ENCODE measurements at regions of chr9 and their contacts with region 1.

Region 1: GRCh38 chr9:77892171-77892570 is 139.4 kb downstream of the GNAQ start:
- DNase-seq: no peak
- ATAC-seq: no peak
- H3K4me3 ChIP-seq: no peak overlapping the region
- H3K27ac ChIP-seq: no peak overlapping the region
- H3K4me1 ChIP-seq: no peaks in the 10 kb centered on the region
- H3K27me3 ChIP-seq: no peaks in the 10 kb centered on the region
- CTCF ChIP-seq: no peak

Region 2: DNA sequence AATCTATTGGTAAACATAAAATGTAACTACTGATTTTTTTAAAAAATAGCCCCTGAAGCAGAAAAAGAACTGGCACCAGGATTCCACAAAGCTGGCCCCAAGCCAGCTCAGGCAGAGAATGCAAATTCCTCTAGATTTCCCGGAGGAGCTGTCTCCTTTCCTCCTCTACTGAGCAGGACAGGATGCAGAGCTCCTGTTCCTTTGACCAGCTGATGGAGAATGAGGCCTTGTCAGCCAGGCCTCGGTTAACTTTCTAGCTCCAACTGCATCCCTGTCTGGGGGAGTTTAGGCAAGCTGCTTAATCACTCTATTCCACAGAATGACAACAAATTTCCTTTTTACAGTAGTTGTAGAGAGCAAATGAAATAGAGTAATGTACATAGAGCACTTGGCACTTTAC is 16.1 kb before region 1 on chr9:
- CTCF ChIA-PET with region 1: no interaction called
- POLR2A ChIA-PET with region 1: interaction called, 17 read pairs
- in situ Hi-C with region 1: no loop called
- intact Hi-C with region 1: no loop called
- DNase-seq: no peak
- ATAC-seq: no peak
- H3K4me3 ChIP-seq: no peak overlapping the region
- H3K27ac ChIP-seq: no peak overlapping the region
- H3K4me1 ChIP-seq: no peaks in the 10 kb centered on the region
- H3K27me3 ChIP-seq: no peaks in the 10 kb centered on the region
- CTCF ChIP-seq: no peak